Sciatic nerve (tissue), 2 donors: ENCODE measurements at regions of chr22 and their contacts with region 1.

Region 1: GRCh38 chr22:29306175-29306834 is at the start of gene GAS2L1:
- DNase-seq: peak; percentile 90
- ATAC-seq: peak; percentile 80
- total RNA-seq, gene GAS2L1: 31.8 TPM

Region 2: GRCh38 chr22:29359469-29359868 is 53.2 kb after region 1 on chr22:
- intact Hi-C with region 1: loop called (anchors 10 kb)
- DNase-seq: peak; percentile 70
- ATAC-seq: peak; percentile 75